Activated CD4-positive, alpha-beta T cell treated with anti-CD3 and anti-CD28 coated beads, Interleukin-2, amount 10 ng/mL, durations not matched to agents 24 days and 14 days (primary cell): ENCODE measurements at regions of chr1 and their contacts with region 1.

Region 1: DNA sequence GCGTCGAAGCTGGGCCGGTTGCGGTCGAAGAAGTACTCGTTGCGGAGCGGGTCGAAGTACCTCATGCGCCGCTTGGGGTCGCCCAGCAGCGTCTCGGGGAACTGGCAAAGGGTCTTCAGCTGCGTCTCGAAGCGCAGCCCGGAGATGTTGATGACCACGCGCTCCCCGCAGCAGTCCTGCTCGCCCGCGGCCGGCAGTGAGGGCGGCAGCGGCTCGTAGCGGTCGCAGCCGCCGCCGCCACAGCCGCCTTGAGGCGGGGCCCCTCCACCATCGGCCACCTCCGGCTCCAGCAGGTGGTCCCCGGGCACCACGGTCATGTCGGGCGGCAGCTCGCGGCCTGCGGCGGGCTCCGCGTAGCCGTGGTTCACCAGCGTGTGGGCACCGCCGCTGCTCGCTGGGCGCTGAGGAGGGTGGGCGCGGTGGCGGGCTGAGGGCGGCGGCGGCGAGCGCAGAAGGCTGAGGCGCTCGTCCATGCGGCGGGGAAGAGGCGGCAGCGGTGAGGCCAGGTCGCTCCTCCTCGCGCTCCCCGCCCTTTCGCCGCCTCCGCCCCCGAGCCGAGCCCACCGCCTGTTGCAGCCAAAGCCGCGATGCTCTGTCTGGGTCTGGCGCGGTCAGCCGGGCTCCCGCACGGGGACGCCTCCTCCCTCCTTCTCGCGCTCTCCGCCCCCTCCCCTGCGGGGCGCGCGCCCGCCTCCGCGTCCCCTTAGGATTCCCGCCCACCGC is at the start of gene KCNA3:
- DNase-seq: peak; percentile 92
- H3K4me3 Mint-ChIP-seq: peak within 1 kb of the TSS; percentile 95
- H3K27ac Mint-ChIP-seq: peak within 1 kb of the TSS; percentile 94
- H3K4me1 Mint-ChIP-seq: peaks cover 50% of the 10 kb centered on the region
- H3K27me3 Mint-ChIP-seq: no peaks in the 10 kb centered on the region
- total RNA-seq, gene KCNA3: 26.9 and 29.5 TPM in 2 replicates

Region 2: DNA sequence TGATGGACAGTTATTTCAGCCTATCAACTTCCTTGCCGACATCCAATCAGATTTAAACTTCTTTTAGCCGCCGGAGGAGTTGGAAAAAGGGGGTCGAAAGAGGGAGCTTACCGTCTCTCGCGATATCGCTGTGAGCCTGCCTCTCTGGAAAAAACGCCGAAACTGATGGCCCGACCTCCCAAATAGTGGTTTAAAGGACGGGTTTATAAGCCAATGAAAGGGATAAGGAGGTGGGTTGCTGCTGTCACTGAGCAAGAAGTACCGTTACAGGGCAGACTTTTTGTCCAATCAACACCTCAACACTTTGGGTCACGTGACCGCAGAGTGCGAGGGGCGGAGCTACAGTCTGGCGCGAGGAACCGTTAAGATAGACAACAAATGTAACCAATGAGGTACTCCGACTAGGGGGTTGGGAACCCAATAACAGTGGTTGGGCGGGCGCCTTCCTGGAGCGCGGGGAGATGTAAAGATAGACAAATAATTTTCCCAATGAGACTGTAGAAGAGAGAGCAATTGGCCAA is 335.6 kb before region 1 on chr1 and contains the start of gene RBM15:
- intact Hi-C with region 1: loop called (anchors 5 kb)
- DNase-seq: peak; percentile 99
- H3K4me3 Mint-ChIP-seq: no peak within 1 kb of the TSS
- H3K27ac Mint-ChIP-seq: no peak within 1 kb of the TSS
- H3K4me1 Mint-ChIP-seq: peaks cover 60% of the 10 kb centered on the region
- H3K27me3 Mint-ChIP-seq: no peaks in the 10 kb centered on the region
- total RNA-seq, gene RBM15: 55.6 and 57.1 TPM in 2 replicates

Region 3: GRCh38 chr1:110726755-110727154 is 52.3 kb after region 1 on chr1:
- intact Hi-C with region 1: loop called (anchors 5 kb)
- DNase-seq: peak; percentile 60
- H3K4me3 Mint-ChIP-seq: peak overlapping the region; percentile 35
- H3K27ac Mint-ChIP-seq: peak overlapping the region; percentile 6
- H3K4me1 Mint-ChIP-seq: peaks cover 29% of the 10 kb centered on the region
- H3K27me3 Mint-ChIP-seq: no peaks in the 10 kb centered on the region

Region 4: GRCh38 chr1:110872745-110873720 is 198.5 kb after region 1 on chr1 and contains the start of gene CD53:
- intact Hi-C with region 1: loop called (anchors 1 kb)
- DNase-seq: peak; percentile 87
- H3K4me3 Mint-ChIP-seq: peak within 1 kb of the TSS; percentile 98
- H3K27ac Mint-ChIP-seq: peak within 1 kb of the TSS; percentile 97
- H3K4me1 Mint-ChIP-seq: peaks cover 34% of the 10 kb centered on the region
- H3K27me3 Mint-ChIP-seq: no peaks in the 10 kb centered on the region
- total RNA-seq, gene CD53: 185 and 190 TPM in 2 replicates

Region 5: GRCh38 chr1:111214074-111214801 is 539.7 kb after region 1 on chr1:
- intact Hi-C with region 1: loop called (anchors 2 kb)
- DNase-seq: peak; percentile 76
- H3K4me3 Mint-ChIP-seq: peak overlapping the region; percentile 84
- H3K27ac Mint-ChIP-seq: peak overlapping the region; percentile 92
- H3K4me1 Mint-ChIP-seq: peaks cover 69% of the 10 kb centered on the region
- H3K27me3 Mint-ChIP-seq: no peaks in the 10 kb centered on the region